Activated CD4-positive, alpha-beta T cell treated with anti-CD3 and anti-CD28 coated beads for 36 hours (primary cell): ENCODE measurements at regions of chr2 and their contacts with region 1.

Region 1: GRCh38 chr2:210517252-210517651 is 39.1 kb upstream of the CPS1 start:
- DNase-seq: no peak
- ATAC-seq: no peak
- H3K4me3 Mint-ChIP-seq: no peak overlapping the region
- H3K27ac Mint-ChIP-seq: no peak overlapping the region
- H3K4me1 Mint-ChIP-seq: no peaks in the 10 kb centered on the region
- H3K27me3 Mint-ChIP-seq: peaks cover 13% of the 10 kb centered on the region

Region 2: DNA sequence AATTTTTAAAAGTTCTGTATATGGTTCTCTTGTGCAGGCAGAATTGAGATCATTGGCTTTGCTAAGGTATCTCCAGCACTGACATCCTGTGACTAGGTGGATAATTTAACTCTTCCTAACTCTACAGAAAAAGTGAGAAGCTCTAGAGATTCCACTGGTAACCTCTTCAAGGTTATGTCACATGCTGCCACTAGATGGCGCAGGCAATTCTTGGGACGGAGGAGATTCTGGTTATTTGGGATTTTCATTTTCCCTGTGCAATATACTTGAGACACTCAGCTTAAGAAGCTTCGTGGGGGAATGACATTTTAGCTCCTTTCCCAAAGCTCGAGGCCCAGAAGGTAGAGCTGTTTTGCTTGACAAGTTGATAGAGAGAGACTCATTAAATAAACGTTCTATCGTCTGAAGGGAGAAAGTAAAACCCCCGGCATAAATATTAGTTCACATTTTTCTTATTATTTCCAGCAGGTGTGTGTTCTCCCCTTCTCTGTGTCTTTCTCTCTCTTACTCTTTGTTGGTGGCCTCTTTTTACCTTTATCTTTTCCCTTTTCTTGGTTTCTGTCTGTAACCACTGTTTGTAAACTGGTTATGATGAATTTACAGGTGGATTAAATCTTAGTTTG is 14.1 kb before region 1 on chr2:
- CTCF ChIA-PET with region 1: interaction called, 11 read pairs
- POLR2A ChIA-PET with region 1: no interaction called
- intact Hi-C with region 1: no loop called
- DNase-seq: peak; percentile 48
- ATAC-seq: peak; percentile 39
- H3K4me3 Mint-ChIP-seq: peak overlapping the region; percentile 8
- H3K27ac Mint-ChIP-seq: no peak overlapping the region
- H3K4me1 Mint-ChIP-seq: no peaks in the 10 kb centered on the region
- H3K27me3 Mint-ChIP-seq: peaks cover 20% of the 10 kb centered on the region

Region 3: GRCh38 chr2:210626849-210627248 is 109.6 kb after region 1 on chr2:
- CTCF ChIA-PET with region 1: no interaction called
- POLR2A ChIA-PET with region 1: no interaction called
- intact Hi-C with region 1: no loop called
- DNase-seq: no peak
- ATAC-seq: no peak
- H3K4me3 Mint-ChIP-seq: no peak overlapping the region
- H3K27ac Mint-ChIP-seq: no peak overlapping the region
- H3K4me1 Mint-ChIP-seq: no peaks in the 10 kb centered on the region
- H3K27me3 Mint-ChIP-seq: peaks cover 2% of the 10 kb centered on the region